ENCODE measurements at regions of chr3 and their contacts with region 1.

Region 1: DNA sequence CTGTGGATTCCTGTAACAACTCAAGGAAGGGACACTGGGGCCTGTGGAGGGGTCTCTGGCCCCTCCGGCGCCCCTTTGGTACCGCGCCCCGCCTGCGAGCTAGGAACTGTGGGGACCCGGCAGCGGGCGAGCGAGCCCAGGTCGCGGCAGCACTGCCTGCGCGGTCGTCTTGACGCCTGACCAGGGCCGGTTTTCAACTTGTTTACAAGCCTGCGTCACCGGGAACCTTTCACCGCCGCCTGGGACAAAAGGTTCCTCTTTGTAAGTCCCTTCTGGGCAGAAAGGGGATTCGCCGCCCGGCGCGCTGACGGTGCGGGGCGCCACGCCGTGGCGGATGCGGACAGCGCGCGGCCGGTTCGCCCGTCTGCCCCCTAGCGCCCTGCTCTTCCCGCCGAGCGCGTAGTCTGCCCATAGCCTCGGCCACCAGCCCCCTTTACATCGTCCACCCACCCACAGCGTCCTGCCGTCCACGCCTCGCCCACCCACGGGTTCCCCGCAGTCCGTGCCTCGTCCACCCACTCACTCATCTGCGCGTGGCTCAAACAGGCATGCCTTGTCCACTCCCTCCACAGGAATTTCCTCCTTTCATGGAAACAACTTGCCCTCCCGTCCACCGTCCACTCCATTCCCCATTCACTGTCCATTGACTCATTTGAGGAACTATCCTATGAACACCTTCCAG is 5.5 kb upstream of the CFAP100 start:
- DNase-seq: peak; percentile 88

Region 2: DNA sequence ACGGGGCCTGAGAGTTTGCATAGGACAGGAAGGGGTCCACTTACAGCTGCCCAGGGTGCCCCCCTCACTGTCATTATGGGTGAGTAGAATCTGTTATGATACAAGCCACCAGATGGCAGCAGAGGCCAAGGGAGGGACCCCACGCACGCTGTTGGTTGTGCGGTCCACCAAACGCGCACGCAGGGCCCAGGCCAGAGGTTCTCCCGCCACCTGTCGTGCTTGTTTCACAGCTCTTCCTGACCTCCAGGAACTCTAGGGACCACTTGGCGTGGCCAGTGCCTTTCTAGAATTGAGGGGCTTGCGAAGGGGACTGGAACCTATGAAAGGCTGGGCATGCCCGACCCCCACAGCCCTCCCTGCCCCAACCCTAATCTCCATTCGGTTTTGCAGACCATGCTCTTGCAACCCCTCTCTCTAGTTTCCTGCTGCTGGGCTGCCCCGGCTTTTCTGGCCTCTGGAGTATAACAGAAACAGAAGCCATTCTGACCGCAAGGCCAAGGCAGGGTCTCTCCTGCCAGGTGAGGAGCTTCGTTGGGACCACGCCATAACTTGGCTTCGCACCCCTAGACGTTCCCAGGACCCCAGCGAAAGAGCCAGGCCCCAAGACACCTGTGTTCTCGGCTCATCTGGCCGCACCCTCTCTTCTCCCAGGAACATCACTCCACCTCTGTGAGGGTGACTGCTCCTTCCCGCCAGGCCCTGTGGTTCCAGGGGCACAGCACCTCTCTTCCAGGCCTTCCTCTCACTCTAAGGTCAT is 254.9 kb before region 1 on chr3:
- intact Hi-C with region 1: loop called (anchors 1 kb)
- DNase-seq: peak; percentile 74

Region 3: GRCh38 chr3:126245811-126246727 is 143.2 kb before region 1 on chr3:
- intact Hi-C with region 1: loop called (anchors 1 kb)
- DNase-seq: no peak

Region 4: DNA sequence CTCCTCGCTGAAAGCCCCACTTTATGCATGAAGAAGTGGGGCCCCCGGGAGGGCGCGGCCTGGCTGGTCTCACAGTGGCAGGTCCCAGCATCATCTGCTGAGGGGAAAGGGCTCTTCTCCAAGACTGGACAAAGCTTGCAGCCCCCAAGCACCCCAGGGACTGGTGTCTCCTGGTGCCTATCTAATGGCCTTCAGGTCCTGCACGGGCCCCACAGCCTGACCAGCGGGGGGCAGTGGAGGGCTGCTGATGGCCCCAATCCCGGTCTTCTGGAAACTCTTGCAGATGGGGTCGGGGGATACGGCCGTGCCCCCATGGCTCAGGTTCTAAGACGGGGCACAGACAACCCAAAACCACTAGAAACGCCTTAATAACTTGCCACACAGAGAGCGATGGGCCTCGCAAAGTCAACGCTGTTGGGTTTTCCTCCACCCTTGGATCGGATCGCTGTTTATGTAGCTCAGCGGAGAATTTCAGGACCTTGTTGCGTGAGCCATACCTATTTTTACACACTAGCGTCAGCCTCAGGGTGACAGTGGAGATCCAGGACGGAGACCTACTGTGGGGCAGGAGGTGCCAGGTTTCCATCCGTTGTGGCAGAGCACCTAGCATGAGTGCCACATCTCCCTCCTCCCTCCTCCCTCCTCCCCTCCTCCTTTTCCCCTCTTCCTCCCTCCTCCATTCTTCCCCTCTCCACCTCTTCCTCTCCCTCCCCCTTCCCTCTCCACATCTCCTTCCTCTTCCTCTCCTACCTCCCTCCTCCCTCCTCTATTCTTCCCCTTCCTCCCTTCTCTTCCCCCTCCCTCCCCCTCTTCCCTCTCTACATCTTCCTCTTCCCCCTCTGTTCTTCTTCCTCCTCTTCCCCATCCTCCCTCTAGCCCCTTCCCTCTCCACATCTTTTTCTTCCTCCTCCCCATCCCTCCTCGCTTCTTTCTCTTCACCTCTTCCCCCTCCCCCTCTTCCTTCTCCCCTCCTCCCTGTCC is 129.6 kb before region 1 on chr3:
- intact Hi-C with region 1: loop called (anchors 1 kb)
- DNase-seq: peak; percentile 84

Measured in cardiac septum (tissue), 1 donor.